A673 (cell line): ENCODE measurements at regions of chr1 and their contacts with region 1.

Region 1: DNA sequence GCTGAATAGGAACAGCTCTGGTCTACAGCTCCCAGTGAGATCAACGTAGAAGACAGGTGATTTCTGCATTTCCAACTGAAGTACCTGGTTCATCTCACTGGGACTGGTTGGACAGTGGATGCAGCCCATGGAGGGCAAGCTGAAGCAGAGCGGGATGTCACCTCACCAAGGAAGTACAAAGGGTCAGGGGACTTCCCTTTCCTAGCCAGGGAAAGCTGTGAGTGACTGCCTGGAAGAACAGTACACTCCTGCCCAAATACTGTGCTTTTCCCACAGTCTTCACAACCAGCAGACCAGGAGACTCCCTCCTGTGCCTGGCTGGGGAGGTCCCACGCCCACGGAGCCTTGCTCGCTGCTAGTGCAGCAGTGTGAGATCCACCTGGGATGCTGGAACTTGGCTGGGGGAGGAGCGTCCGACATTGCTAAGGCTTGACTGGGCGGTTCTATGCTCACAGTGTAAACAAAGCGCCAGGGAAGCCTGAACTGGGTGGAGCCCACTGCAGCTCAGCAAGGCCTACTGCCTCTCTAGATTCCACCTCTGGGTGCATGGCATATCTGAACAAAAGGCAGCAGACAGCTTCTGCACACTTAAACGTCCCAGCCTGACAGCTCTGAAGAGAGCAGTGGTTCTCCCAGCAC is 14.7 kb downstream of the CR1L start:
- DNase-seq: no peak
- H3K4me3 ChIP-seq: no peak overlapping the region
- H3K27ac ChIP-seq: no peak overlapping the region
- H3K4me1 ChIP-seq: no peaks in the 10 kb centered on the region
- H3K27me3 ChIP-seq: peaks cover 32% of the 10 kb centered on the region
- CTCF ChIP-seq: no peak

Region 2: DNA sequence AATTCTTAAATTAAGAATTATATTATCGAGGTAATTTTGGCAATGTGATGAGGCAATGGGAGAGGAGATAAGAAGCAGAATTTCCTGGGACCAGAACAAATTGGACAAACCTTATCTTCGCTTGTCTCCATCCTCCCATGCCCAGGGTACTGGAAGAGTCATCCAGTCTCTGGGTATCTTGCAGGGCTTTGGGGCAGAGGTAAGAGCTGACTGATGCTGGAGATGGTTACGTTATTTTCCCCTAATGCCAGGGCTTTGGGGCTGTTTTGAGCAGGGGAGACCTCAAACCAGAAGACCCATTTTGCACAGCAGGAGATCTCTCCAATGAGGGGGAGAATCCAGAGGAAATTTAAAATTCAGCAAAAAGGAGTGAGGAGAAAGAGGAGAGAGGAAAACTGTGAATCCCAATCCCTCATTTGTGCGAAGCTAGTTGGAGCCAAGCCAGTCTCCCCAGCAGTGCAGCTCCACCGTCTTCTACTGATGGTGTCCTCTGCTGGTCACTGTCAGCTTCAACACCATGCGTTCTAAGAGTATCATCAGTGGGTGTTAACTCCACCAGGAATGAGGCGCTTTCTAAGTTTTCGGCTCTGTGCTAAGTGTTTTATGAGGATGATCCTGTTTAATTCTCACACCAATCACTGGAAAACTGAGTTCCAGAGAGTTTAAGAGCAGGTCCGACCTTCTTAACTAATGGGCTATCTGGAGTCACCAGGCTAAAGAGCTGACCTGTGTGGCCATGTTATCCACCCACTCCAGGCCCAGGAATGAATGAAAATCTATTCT is 338.0 kb after region 1 on chr1:
- CTCF ChIA-PET with region 1: no interaction called
- POLR2A ChIA-PET with region 1: no interaction called
- intact Hi-C with region 1: no loop called
- DNase-seq: peak; percentile 78
- H3K4me3 ChIP-seq: no peak overlapping the region
- H3K27ac ChIP-seq: no peak overlapping the region
- H3K4me1 ChIP-seq: no peaks in the 10 kb centered on the region
- H3K27me3 ChIP-seq: peaks cover 18% of the 10 kb centered on the region
- CTCF ChIP-seq: peak; percentile 91

Region 3: DNA sequence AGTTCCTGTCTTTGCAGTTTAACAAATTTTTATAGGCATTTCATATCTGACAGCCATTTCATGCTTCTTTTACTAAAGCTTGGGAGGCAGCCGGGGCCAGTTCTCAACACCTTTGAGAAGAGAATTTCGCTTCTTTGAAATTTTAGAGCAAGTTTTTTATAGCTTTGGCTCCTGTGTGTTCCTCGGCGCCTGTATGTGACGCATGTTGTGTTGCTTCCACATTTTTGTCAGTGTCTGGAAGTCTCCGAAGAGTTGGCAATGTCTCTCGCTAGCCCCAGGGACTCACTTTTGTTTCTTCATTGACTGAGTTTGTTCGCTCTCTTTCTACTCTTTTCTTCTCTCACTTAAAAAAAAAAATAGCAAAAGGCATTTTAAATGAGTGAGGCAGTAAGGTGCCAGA is 971.4 kb after region 1 on chr1:
- CTCF ChIA-PET with region 1: no interaction called
- POLR2A ChIA-PET with region 1: interaction called, 10 read pairs
- intact Hi-C with region 1: no loop called
- DNase-seq: no peak
- H3K4me3 ChIP-seq: no peak overlapping the region
- H3K27ac ChIP-seq: no peak overlapping the region
- H3K4me1 ChIP-seq: no peaks in the 10 kb centered on the region
- H3K27me3 ChIP-seq: peaks cover 28% of the 10 kb centered on the region
- CTCF ChIP-seq: no peak